ENCODE measurements at regions of chr12 and their contacts with region 1.

Region 1: GRCh38 chr12:48988030-48988649 is 10.0 kb downstream of the WNT1 start:
- DNase-seq: peak; percentile 91
- ATAC-seq: peak; percentile 89
- H3K4me3 Mint-ChIP-seq: no peak overlapping the region
- H3K27ac Mint-ChIP-seq: no peak overlapping the region
- H3K4me1 Mint-ChIP-seq: peaks cover 10% of the 10 kb centered on the region
- H3K27me3 Mint-ChIP-seq: peaks cover 76% of the 10 kb centered on the region
- CTCF ChIP-seq: peak; percentile 96

Region 2: DNA sequence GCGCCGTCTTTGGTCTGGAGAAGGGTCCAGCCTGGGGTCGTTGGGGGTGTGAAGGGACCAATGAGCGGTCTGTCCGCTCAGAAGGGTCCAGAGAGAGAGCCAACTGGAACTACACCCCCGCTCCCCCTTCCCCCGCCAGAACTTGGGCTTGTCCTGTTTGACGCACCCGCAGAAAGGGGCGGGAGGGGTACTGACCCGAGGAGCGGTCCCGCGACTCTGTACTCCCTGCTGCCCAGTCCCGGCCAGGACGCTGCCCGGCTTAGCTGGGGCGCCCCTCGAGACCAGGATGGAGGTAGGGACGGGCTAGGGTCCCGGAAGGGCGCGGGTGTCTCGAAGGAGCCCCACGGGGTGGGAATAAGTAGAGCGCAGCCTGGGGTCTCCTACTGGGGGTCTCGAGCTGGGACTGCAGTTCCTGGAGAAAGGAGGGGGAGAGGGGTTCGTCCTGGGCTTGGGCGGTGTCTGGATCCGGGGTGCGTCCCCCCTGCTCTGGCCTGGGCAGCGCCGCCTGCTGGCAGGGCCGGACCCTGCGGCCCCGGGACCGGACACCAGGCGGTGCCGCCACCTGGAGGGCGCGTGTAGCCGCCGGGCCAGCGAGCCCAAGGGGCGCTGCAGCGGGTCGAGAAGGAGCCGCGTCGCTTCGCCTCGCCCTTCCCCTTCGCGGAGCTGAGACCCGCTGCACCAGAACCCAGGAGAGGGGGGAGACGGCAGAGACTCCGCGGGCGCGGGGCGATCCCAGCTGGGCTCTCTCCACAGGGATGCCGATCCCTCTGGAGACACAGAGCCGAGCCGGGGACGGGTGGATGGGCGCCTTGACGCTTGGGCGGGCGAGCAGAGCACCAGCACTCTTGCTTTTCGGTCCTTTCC is 173.6 kb before region 1 on chr12:
- CTCF ChIA-PET with region 1: interaction called, 17 read pairs
- POLR2A ChIA-PET with region 1: no interaction called
- DNase-seq: peak; percentile 81
- ATAC-seq: peak; percentile 25
- H3K4me3 Mint-ChIP-seq: peak overlapping the region; percentile 87
- H3K27ac Mint-ChIP-seq: no peak overlapping the region
- H3K4me1 Mint-ChIP-seq: peaks cover 45% of the 10 kb centered on the region
- H3K27me3 Mint-ChIP-seq: peaks cover 69% of the 10 kb centered on the region
- CTCF ChIP-seq: peak; percentile 92

Region 3: GRCh38 chr12:48865434-48866290 is 122.5 kb before region 1 on chr12 and contains the start of gene RND1:
- CTCF ChIA-PET with region 1: interaction called, 27 read pairs
- POLR2A ChIA-PET with region 1: no interaction called
- DNase-seq: peak; percentile 92
- ATAC-seq: peak; percentile 96
- H3K4me3 Mint-ChIP-seq: peak within 1 kb of the TSS; percentile 91
- H3K27ac Mint-ChIP-seq: peak within 1 kb of the TSS; percentile 94
- H3K4me1 Mint-ChIP-seq: peaks cover 44% of the 10 kb centered on the region
- H3K27me3 Mint-ChIP-seq: peaks cover 6% of the 10 kb centered on the region; the same call in 1 of the 2 replicates
- CTCF ChIP-seq: no peak
- total RNA-seq, gene RND1: 7.6 to 9.1 TPM (median 8.5 TPM) in 3 replicates

Region 4: GRCh38 chr12:48903982-48904411 is 84.1 kb before region 1 on chr12:
- CTCF ChIA-PET with region 1: interaction called, 18 read pairs
- POLR2A ChIA-PET with region 1: no interaction called
- DNase-seq: peak; percentile 92
- ATAC-seq: peak; percentile 100
- H3K4me3 Mint-ChIP-seq: peak overlapping the region; percentile 65
- H3K27ac Mint-ChIP-seq: no peak overlapping the region
- H3K4me1 Mint-ChIP-seq: 0 out of 2 replicates have a peak, but pooled peaks cover 3% of the 10 kb centered on the region
- H3K27me3 Mint-ChIP-seq: peaks cover 14% of the 10 kb centered on the region
- CTCF ChIP-seq: peak; percentile 45; the same call in 1 of the 2 replicates

Region 5: DNA sequence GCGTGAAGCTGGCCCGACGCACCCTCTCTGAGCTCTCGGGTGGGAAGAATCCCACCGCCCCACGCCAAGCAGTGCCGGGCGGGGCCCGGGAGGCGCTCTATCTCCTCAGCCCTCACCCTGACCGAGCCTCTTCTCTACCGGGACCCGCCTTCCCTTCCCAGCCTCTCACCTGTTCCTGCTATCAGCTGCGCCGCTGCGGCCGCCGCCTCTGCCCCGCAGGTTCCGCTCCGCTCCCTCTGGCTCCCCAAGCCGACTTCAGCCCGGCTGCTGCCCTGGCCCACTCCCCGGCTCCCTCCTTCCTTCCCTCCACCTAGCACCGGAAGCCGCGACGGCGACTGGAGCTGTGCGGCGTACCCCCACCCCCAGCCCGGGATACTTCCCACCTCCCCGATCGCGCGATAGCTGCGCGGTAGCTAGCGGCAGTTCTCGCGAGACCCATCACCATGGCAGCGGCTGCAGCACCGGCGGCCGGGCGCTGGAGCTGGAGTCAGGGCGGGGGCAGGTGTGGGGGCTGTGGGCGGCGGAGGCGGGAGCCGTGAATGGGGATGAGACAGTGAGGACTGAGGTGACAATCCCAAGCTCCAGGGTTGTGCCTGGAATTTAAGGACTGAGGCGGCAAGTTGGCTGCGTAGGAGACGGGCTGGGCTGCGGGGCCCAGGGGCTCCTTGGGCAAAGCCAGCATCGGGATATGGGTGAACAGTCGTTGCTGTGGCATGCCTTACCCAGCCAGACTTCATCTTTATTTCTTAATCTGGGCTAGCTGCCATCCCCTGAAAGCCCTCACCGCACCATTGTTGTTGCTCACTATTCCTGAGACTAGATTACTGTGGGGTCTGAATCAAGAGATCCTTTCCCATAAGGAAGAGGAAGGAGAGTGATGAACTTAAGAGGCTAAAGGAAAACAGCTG is 30.7 kb before region 1 on chr12 and contains the start of gene ARF3:
- CTCF ChIA-PET with region 1: interaction called, 27 read pairs
- POLR2A ChIA-PET with region 1: interaction called, 4 read pairs
- DNase-seq: peak; percentile 98
- ATAC-seq: peak; percentile 89
- H3K4me3 Mint-ChIP-seq: peak within 1 kb of the TSS; percentile 95
- H3K27ac Mint-ChIP-seq: peak within 1 kb of the TSS; percentile 97
- H3K4me1 Mint-ChIP-seq: peaks cover 31% of the 10 kb centered on the region
- H3K27me3 Mint-ChIP-seq: peaks cover 7% of the 10 kb centered on the region; the same call in 1 of the 2 replicates
- CTCF ChIP-seq: no peak
- total RNA-seq, gene ARF3: 238 to 256 TPM (median 248 TPM) in 3 replicates

Region 6: GRCh38 chr12:49018261-49019119 is 30.4 kb after region 1 on chr12 and contains the start of gene PRKAG1:
- CTCF ChIA-PET with region 1: interaction called, 13 read pairs
- POLR2A ChIA-PET with region 1: no interaction called
- DNase-seq: peak; percentile 97
- ATAC-seq: peak; percentile 94
- H3K4me3 Mint-ChIP-seq: peak within 1 kb of the TSS; percentile 91
- H3K27ac Mint-ChIP-seq: peak within 1 kb of the TSS; percentile 99
- H3K4me1 Mint-ChIP-seq: peaks cover 16% of the 10 kb centered on the region
- H3K27me3 Mint-ChIP-seq: peaks cover 6% of the 10 kb centered on the region
- CTCF ChIP-seq: no peak
- total RNA-seq, gene PRKAG1: 37.9 to 41.6 TPM (median 38.0 TPM) in 3 replicates

Region 7: GRCh38 chr12:49088190-49088931 is 100.2 kb after region 1 on chr12:
- CTCF ChIA-PET with region 1: interaction called, 21 read pairs
- POLR2A ChIA-PET with region 1: no interaction called
- DNase-seq: peak; percentile 75
- ATAC-seq: peak; percentile 78
- H3K4me3 Mint-ChIP-seq: peak overlapping the region; percentile 50
- H3K27ac Mint-ChIP-seq: no peak overlapping the region
- H3K4me1 Mint-ChIP-seq: peaks cover 40% of the 10 kb centered on the region
- H3K27me3 Mint-ChIP-seq: peaks cover 92% of the 10 kb centered on the region
- CTCF ChIP-seq: peak; percentile 83